ENCODE measurements at regions of chr15 and their contacts with region 1.

Region 1: GRCh38 chr15:89430530-89431341 is 65.6 kb downstream of the RHCG start:
- H3K4me3 Mint-ChIP-seq: peak overlapping the region; percentile 77
- H3K27ac Mint-ChIP-seq: no peak overlapping the region
- H3K4me1 Mint-ChIP-seq: peaks cover 7% of the 10 kb centered on the region
- H3K27me3 Mint-ChIP-seq: peaks cover 60% of the 10 kb centered on the region

Region 2: GRCh38 chr15:89472785-89473256 is 42.1 kb after region 1 on chr15:
- intact Hi-C with region 1: loop called (anchors 2 kb)
- H3K4me3 Mint-ChIP-seq: no peak overlapping the region
- H3K27ac Mint-ChIP-seq: no peak overlapping the region
- H3K4me1 Mint-ChIP-seq: no peaks in the 10 kb centered on the region
- H3K27me3 Mint-ChIP-seq: peaks cover 61% of the 10 kb centered on the region

Measured in dendritic cell treated with granulocyte-macrophage colony-stimulating factor and Interleukin-4, amounts not matched to agents 40 ng/mL and 50 ng/mL, for 4 days (primary cell).